H1 (cell line): ENCODE measurements at regions of chr19 and their contacts with region 1.

Region 1: GRCh38 chr19:50486823-50487511 is 10.3 kb upstream of the GARIN5A start:
- DNase-seq: peak; percentile 88 to 97
- H3K4me3 ChIP-seq: no peak overlapping the region
- H3K27ac ChIP-seq: no peak overlapping the region
- H3K4me1 ChIP-seq: peaks cover 0 to 15% (median 6%) of the 10 kb centered on the region in 4 experiments; a peak in 4 of 7 replicates
- H3K27me3 ChIP-seq: peaks cover 5 to 50% (median 34%) of the 10 kb centered on the region in 4 experiments
- CTCF ChIP-seq: peak; percentile 84 to 98 (median 94)
- EP300 ChIP-seq: no peak
- POLR2A ChIP-seq: no peak
- RAD21 ChIP-seq: peak; percentile 82 to 85

Region 2: DNA sequence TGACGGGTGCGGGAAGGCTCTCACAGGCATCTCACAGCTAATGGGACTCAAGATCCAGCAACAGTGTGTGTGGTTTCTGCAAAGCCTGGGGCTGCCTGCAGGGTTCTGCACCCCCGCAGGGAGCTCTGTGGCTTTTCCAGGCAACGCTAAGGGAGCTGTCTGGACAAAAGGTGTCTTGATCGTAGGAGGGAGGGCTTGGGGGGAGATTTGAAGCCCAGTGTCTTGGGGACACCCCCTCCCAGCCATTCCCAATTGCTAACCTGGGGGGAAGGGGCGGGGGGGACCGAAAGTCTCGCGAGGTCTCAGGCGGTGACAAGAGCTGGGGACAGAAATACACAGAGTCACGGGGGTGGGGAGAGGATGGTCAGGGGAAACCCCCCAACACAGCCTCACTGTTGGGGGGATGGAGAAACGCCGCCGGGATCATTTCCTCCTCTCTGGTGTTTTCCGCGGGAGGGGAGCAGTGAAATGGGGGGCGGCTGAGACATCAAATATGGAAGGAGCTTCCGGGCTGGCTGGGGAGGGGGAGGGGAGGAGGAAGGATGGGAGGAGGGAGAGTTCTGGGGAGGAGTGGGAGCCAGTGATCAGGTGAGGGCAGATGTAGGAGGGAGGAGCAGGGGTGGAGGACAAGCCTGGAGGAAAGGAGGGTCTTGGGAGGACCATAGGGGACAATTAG is 171.1 kb before region 1 on chr19:
- CTCF ChIA-PET with region 1: no interaction called
- POLR2A ChIA-PET with region 1: no interaction called
- DNase-seq: peak in 1 of 2 experiments; percentile 83
- H3K4me3 ChIP-seq: peak overlapping the region; percentile 36 to 70 (median 44); a peak in 7 of 8 replicates
- H3K27ac ChIP-seq: peak overlapping the region; percentile 56; the same call in 1 of the 2 replicates
- H3K4me1 ChIP-seq: peaks cover 5 to 18% (median 9%) of the 10 kb centered on the region in 4 experiments
- H3K27me3 ChIP-seq: no peaks in the 10 kb centered on the region; a peak in 1 of 7 replicates
- CTCF ChIP-seq: no peak
- EP300 ChIP-seq: no peak
- POLR2A ChIP-seq: no peak
- RAD21 ChIP-seq: no peak; a peak in 1 of 4 replicates

Region 3: GRCh38 chr19:50476224-50476942 is 10.6 kb before region 1 on chr19 and contains the starts of genes EMC10 and GARIN5A:
- CTCF ChIA-PET with region 1: interaction called, 16 read pairs
- POLR2A ChIA-PET with region 1: interaction called, 12 read pairs
- DNase-seq: peak; percentile 93 to 98
- H3K4me3 ChIP-seq: peak within 1 kb of the TSS; percentile 79 to 92 (median 85)
- H3K27ac ChIP-seq: peak within 1 kb of the TSS; percentile 86
- H3K4me1 ChIP-seq: no peaks in the 10 kb centered on the region
- H3K27me3 ChIP-seq: no peaks in the 10 kb centered on the region; a peak in 1 of 7 replicates
- CTCF ChIP-seq: peak in 1 of 3 experiments; percentile 5; a peak in 1 of 4 replicates
- EP300 ChIP-seq: no peak
- POLR2A ChIP-seq: peak in 1 of 2 experiments; percentile 92; a peak in 2 of 3 replicates
- RAD21 ChIP-seq: no peak
- total RNA-seq, gene EMC10: 103 and 105 TPM in 2 replicates
- total RNA-seq, gene GARIN5A: 8.1 and 9.1 TPM in 2 replicates

Region 4: GRCh38 chr19:50518091-50519005 is 31.4 kb after region 1 on chr19:
- CTCF ChIA-PET with region 1: interaction called, 17 read pairs
- POLR2A ChIA-PET with region 1: interaction called, 3 read pairs
- DNase-seq: peak in 1 of 2 experiments; percentile 89
- H3K4me3 ChIP-seq: no peak overlapping the region
- H3K27ac ChIP-seq: no peak overlapping the region
- H3K4me1 ChIP-seq: peaks cover 0 to 3% (median under 1%) of the 10 kb centered on the region in 4 experiments; a peak in 2 of 7 replicates
- H3K27me3 ChIP-seq: peaks cover 0 to 10% (median 3%) of the 10 kb centered on the region in 4 experiments; a peak in 5 of 7 replicates
- CTCF ChIP-seq: peak; percentile 69 to 87 (median 82)
- EP300 ChIP-seq: no peak
- POLR2A ChIP-seq: no peak
- RAD21 ChIP-seq: no peak; a peak in 1 of 4 replicates

Region 5: GRCh38 chr19:50531118-50531612 is 44.2 kb after region 1 on chr19:
- CTCF ChIA-PET with region 1: interaction called, 26 read pairs
- POLR2A ChIA-PET with region 1: interaction called, 4 read pairs
- DNase-seq: no peak
- H3K4me3 ChIP-seq: no peak overlapping the region
- H3K27ac ChIP-seq: no peak overlapping the region
- H3K4me1 ChIP-seq: peaks cover 0 to 5% (median 1%) of the 10 kb centered on the region in 4 experiments; a peak in 3 of 7 replicates
- H3K27me3 ChIP-seq: no peaks in the 10 kb centered on the region; a peak in 1 of 7 replicates
- CTCF ChIP-seq: no peak
- EP300 ChIP-seq: no peak
- POLR2A ChIP-seq: no peak
- RAD21 ChIP-seq: no peak

Region 6: GRCh38 chr19:50601407-50602088 is 114.6 kb after region 1 on chr19:
- CTCF ChIA-PET with region 1: no interaction called
- POLR2A ChIA-PET with region 1: no interaction called
- DNase-seq: no peak
- H3K4me3 ChIP-seq: no peak overlapping the region
- H3K27ac ChIP-seq: no peak overlapping the region
- H3K4me1 ChIP-seq: peaks cover 0 to 2% (median 0%) of the 10 kb centered on the region in 4 experiments; a peak in 1 of 7 replicates
- H3K27me3 ChIP-seq: peaks cover 0 to 17% (median 14%) of the 10 kb centered on the region in 4 experiments; a peak in 5 of 7 replicates
- CTCF ChIP-seq: no peak
- EP300 ChIP-seq: no peak
- POLR2A ChIP-seq: no peak
- RAD21 ChIP-seq: no peak